Activated naive CD4-positive, alpha-beta T cell treated with anti-CD3 and anti-CD28 coated beads for 36 hours (primary cell): ENCODE measurements at regions of chr9 and their contacts with region 1.

Region 1: DNA sequence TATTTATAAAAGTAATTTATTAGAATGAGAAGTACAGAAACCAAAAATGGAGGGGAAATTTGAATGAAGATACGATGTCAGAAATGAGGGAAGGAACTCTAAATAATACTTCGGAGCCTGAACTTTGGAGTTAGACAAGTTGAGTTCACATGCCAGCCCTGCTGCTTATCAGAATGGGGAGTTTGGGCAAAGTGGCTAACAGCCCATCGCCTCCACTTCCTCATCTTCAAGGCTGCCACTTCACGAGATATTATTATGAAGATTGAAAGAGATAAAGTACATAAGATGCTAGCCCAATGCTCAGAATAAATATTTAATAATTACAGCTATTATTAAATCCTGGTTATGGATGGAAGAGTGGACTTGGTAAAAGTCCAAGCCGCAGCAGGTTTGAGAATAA is 56.2 kb upstream of the ABCA1 start:
- DNase-seq: no peak
- H3K4me3 Mint-ChIP-seq: no peak overlapping the region
- H3K27ac Mint-ChIP-seq: peak overlapping the region; percentile 94
- H3K4me1 Mint-ChIP-seq: peaks cover 70% of the 10 kb centered on the region
- H3K27me3 Mint-ChIP-seq: peaks cover 8% of the 10 kb centered on the region

Region 2: GRCh38 chr9:104968025-104968982 is 15.8 kb before region 1 on chr9:
- CTCF ChIA-PET with region 1: interaction called, 7 read pairs
- intact Hi-C with region 1: loop called (anchors 1 kb)
- DNase-seq: peak; percentile 92
- H3K4me3 Mint-ChIP-seq: peak overlapping the region; percentile 95
- H3K27ac Mint-ChIP-seq: peak overlapping the region; percentile 97
- H3K4me1 Mint-ChIP-seq: peaks cover 12% of the 10 kb centered on the region
- H3K27me3 Mint-ChIP-seq: no peaks in the 10 kb centered on the region

Region 3: DNA sequence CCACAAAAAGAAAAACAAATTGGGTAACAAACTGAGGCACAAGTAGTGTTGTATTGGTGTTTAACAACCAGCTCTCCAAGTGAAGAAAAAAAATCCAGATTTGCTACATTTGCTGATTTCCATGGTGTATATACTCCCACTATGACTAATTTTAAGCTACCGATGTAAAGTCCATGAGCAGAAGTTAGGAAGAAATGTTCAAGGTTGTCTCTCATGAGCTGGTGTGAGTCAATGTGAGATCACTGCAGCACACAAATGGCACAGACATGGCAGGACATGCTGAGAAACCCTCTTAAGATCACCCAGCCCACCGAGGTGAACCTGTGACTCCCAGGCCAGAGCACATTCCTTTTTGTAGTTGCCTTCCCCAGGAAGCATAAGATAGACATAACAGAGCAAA is 296.6 kb after region 1 on chr9:
- CTCF ChIA-PET with region 1: no interaction called
- intact Hi-C with region 1: no loop called
- DNase-seq: no peak
- H3K4me3 Mint-ChIP-seq: no peak overlapping the region
- H3K27ac Mint-ChIP-seq: no peak overlapping the region
- H3K4me1 Mint-ChIP-seq: peaks cover 7% of the 10 kb centered on the region
- H3K27me3 Mint-ChIP-seq: no peaks in the 10 kb centered on the region